ENCODE measurements at regions of chr5 and their contacts with region 1.

Region 1: DNA sequence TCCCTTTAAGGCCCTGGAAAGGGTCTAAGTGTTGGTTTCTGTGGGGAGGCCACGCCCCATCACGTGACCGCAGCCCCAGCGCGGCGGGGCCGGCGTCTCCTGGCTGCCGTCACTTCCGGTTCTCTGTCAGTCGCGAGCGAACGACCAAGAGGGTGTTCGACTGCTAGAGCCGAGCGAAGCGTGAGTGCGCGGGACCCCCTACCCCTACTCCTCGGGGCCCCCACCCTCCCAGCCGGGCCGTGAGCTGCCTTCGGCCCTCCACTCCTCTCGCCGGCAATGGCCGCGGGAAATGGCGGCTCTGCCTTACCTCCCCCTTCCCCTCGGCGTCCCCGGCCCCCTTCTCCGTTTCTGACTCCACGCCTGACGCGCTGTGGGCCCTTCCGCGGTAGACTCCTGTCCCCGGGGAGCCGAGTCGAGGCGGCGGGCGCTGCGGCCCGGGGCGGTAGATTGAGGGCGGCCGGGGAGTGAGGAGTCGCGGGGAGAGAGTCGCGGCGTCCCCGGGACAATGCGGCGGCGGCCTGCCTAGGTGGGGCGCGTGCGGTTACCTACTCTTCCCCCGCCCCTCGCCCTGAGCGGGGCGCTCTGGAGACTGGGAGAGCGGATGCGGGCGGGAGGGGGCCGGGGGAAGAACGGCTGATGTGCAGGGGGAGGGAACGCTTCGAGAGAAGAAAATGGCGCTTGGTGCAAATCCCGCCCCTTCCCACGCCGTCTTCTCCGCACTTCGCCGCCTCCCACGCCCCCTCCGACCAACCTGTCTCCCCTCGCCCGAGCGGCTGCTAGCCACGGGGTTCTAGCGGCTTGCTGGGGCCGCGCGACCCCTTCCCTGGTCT is at the start of gene SUB1:
- DNase-seq: peak; percentile 87
- ATAC-seq: peak; percentile 94
- H3K4me3 ChIP-seq: peak within 1 kb of the TSS; percentile 80 to 99 (median 87)
- H3K27ac ChIP-seq: peak within 1 kb of the TSS; percentile 90
- H3K4me1 ChIP-seq: peaks cover 68% of the 10 kb centered on the region
- H3K27me3 ChIP-seq: no peaks in the 10 kb centered on the region; a peak in 1 of 5 replicates
- CTCF ChIP-seq: peak; percentile 55
- EP300 ChIP-seq: peak in 1 of 2 experiments; percentile 32; a peak in 1 of 4 replicates
- POLR2A ChIP-seq: peak; percentile 91 to 96
- RAD21 ChIP-seq: no peak
- total RNA-seq, gene SUB1: 693 and 1,107 TPM in 2 replicates

Region 2: GRCh38 chr5:32444431-32445286 is 141.0 kb before region 1 on chr5 and contains the start of gene ZFR:
- CTCF ChIA-PET with region 1: no interaction called
- POLR2A ChIA-PET with region 1: no interaction called
- in situ Hi-C with region 1: no loop called
- intact Hi-C with region 1: loop called (anchors 5 kb)
- DNase-seq: peak; percentile 83
- ATAC-seq: peak; percentile 96
- H3K4me3 ChIP-seq: peak within 1 kb of the TSS; percentile 91 to 97 (median 94)
- H3K27ac ChIP-seq: peak within 1 kb of the TSS; percentile 86
- H3K4me1 ChIP-seq: peaks cover 41% of the 10 kb centered on the region
- H3K27me3 ChIP-seq: no peaks in the 10 kb centered on the region; a peak in 1 of 5 replicates
- CTCF ChIP-seq: peak; percentile 13; the same call in 1 of the 2 replicates
- EP300 ChIP-seq: no peak
- POLR2A ChIP-seq: peak; percentile 92 to 93
- RAD21 ChIP-seq: peak; percentile 15; the same call in 1 of the 2 replicates
- total RNA-seq, gene ZFR: 89.0 and 139 TPM in 2 replicates

Region 3: DNA sequence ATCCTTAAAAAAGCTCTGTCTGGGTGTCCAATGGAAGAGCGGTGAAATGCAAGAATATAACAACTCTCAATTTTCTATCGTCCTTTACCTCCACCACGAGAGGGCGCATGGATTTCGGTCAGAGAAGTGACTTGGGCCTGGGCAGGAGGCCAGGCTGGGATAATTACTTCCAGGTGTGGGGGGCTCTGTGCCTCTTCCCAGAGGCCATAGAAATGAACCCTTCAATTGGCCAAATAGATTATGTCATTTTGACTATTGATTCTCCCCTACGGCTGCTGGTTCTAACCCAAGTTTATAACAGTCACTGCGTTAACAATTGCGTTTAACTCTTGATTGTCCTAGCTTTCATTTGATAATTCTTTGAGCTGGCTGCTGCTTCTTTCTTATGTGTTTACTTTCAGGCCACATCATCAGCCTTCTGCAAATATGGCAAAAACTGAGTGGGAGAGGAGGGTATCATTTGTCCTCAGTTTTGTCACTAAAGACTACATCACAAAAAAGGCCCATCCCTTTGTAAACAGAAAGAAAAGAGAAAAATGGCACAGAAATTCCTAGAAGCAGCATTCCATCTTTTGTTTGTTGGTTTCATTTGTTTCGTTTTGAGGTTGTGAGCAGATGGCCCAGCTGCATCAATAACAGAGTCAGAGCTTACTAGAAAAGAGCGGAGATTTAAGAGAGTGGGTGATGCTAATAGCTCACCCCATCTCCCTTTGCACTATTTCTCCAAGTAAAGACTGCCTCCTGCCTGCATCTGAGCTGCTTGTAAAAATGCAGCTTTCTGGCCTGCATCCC is 95.7 kb before region 1 on chr5:
- CTCF ChIA-PET with region 1: interaction called, 48 read pairs
- POLR2A ChIA-PET with region 1: interaction called, 19 read pairs
- in situ Hi-C with region 1: no loop called
- intact Hi-C with region 1: loop called (anchors 1 kb)
- DNase-seq: peak; percentile 75
- ATAC-seq: peak; percentile 82
- H3K4me3 ChIP-seq: peak overlapping the region in 2 of 3 experiments; percentile 2 to 30; a peak in 2 of 6 replicates
- H3K27ac ChIP-seq: no peak overlapping the region
- H3K4me1 ChIP-seq: peaks cover 39% of the 10 kb centered on the region
- H3K27me3 ChIP-seq: no peaks in the 10 kb centered on the region
- CTCF ChIP-seq: peak; percentile 91
- EP300 ChIP-seq: no peak
- POLR2A ChIP-seq: no peak
- RAD21 ChIP-seq: peak; percentile 85

Region 4: GRCh38 chr5:32522429-32523143 is 63.1 kb before region 1 on chr5:
- CTCF ChIA-PET with region 1: interaction called, 11 read pairs
- POLR2A ChIA-PET with region 1: interaction called, 12 read pairs
- in situ Hi-C with region 1: loop called (anchors 5 kb)
- intact Hi-C with region 1: no loop called
- DNase-seq: no peak
- ATAC-seq: no peak
- H3K4me3 ChIP-seq: no peak overlapping the region
- H3K27ac ChIP-seq: no peak overlapping the region
- H3K4me1 ChIP-seq: peaks cover 25% of the 10 kb centered on the region
- H3K27me3 ChIP-seq: no peaks in the 10 kb centered on the region
- CTCF ChIP-seq: no peak
- EP300 ChIP-seq: no peak
- POLR2A ChIP-seq: no peak
- RAD21 ChIP-seq: no peak

Region 5: GRCh38 chr5:32531885-32532520 is 53.7 kb before region 1 on chr5:
- CTCF ChIA-PET with region 1: no interaction called
- POLR2A ChIA-PET with region 1: interaction called, 42 read pairs
- in situ Hi-C with region 1: loop called (anchors 5 kb)
- intact Hi-C with region 1: loop called (anchors 2 kb)
- DNase-seq: peak; percentile 82
- ATAC-seq: peak; percentile 90
- H3K4me3 ChIP-seq: peak overlapping the region; percentile 31 to 58 (median 42); a peak in 5 of 6 replicates
- H3K27ac ChIP-seq: peak overlapping the region; percentile 82
- H3K4me1 ChIP-seq: peaks cover 83% of the 10 kb centered on the region
- H3K27me3 ChIP-seq: no peaks in the 10 kb centered on the region
- CTCF ChIP-seq: no peak
- EP300 ChIP-seq: no peak; a peak in 1 of 4 replicates
- POLR2A ChIP-seq: no peak; a peak in 1 of 4 replicates
- RAD21 ChIP-seq: no peak

Region 6: DNA sequence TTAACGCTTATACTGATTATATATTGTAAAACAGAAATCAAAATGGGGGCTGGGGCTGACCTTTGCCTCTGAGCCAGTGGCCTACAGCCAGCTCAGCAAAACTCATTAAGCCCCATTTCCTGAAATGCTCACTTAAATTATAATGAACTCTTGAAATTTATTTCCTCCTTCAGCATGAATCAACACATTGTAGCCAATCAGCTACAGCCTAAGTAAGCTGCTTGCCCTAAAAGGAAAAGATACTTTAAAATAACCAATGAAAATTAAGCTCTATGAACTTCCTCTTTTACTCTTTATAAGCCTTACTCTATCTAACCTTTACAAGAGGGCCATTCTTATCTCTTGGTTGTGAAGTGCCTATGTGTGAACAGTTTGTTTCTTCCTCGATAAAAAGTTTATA is 33.8 kb before region 1 on chr5:
- CTCF ChIA-PET with region 1: no interaction called
- POLR2A ChIA-PET with region 1: interaction called, 11 read pairs
- in situ Hi-C with region 1: no loop called
- intact Hi-C with region 1: loop called (anchors 2 kb)
- DNase-seq: no peak
- ATAC-seq: no peak
- H3K4me3 ChIP-seq: no peak overlapping the region
- H3K27ac ChIP-seq: no peak overlapping the region
- H3K4me1 ChIP-seq: peaks cover 35% of the 10 kb centered on the region
- H3K27me3 ChIP-seq: no peaks in the 10 kb centered on the region
- CTCF ChIP-seq: no peak
- EP300 ChIP-seq: no peak
- POLR2A ChIP-seq: no peak
- RAD21 ChIP-seq: no peak

Region 7: DNA sequence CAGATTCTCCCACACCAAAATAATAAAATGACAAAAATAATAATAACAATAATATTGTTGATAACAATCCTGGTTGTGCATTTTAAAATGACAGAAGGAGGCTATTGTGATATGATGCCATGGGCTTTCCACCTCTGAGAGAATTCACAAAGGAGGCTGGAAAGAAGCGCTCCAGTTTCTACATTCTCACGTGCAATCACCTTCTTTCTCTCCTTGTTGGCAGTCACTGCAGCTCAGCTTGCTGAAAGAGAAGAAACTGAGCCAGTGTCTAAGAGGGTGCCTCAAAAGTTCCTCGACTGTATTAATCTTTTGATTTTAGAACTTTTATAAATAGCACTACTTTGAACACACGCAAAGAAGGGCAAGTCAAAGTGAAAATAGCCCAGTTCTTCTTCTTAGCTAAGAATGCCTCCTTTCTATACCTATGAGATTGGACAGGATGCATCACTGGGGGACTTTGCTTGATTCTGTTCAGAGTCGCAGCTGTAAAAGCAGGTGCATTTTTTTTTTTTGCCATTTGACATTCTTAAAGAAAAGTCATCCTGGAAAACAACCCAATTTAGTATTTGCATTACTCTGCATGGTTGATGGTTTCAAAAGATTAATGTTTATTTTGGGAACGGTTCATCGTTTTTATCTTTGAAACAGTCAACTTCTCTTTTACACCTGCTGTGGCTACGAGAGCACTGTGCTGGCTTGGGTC is 12.7 kb before region 1 on chr5:
- CTCF ChIA-PET with region 1: no interaction called
- POLR2A ChIA-PET with region 1: interaction called, 18 read pairs
- in situ Hi-C with region 1: no loop called
- intact Hi-C with region 1: loop called (anchors 1 kb)
- DNase-seq: no peak
- ATAC-seq: no peak
- H3K4me3 ChIP-seq: no peak overlapping the region
- H3K27ac ChIP-seq: peak overlapping the region; percentile 99
- H3K4me1 ChIP-seq: peaks cover 52% of the 10 kb centered on the region
- H3K27me3 ChIP-seq: no peaks in the 10 kb centered on the region
- CTCF ChIP-seq: no peak
- EP300 ChIP-seq: no peak
- POLR2A ChIP-seq: no peak
- RAD21 ChIP-seq: no peak

Measured in HepG2 (cell line).